CD4-positive, alpha-beta memory T cell (primary cell): ENCODE measurements at regions of chr1 and their contacts with region 1.

Region 1: DNA sequence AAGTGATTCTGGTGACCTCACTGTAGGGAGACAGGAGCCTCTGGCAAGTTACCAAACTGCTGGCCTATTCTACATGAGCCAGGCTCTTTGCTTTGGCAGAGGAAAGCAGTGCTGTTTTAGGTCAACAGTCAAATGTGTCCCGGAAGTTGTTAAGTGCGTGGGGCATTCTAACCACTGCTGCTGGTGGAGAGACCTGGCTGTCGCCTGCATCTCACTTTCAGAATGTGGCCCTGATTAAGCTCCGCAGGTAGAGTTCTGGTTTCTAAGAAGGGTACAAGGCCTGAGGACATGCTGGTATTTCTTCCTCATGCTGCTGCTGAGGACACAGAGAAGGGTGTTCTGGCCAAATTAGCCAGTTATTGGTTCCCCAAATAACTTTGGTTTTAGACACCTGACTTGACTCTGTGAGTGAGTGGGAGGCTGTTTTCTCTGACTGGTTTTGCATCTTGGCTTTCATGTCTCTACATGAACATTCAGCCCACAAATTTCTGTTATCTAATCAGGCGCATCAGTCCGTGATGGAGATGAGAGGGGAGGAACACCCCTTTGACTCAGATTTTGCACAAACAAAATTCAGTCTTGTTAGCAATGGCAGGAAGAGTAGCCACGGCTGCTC is 120.8 kb downstream of the LMO4 start:
- DNase-seq: peak; percentile 41 to 56 (median 51)
- H3K4me3 ChIP-seq: no peak overlapping the region
- H3K4me3 Mint-ChIP-seq: peak overlapping the region; percentile 45 to 89 (median 79)
- H3K27ac ChIP-seq: no peak overlapping the region
- H3K27ac Mint-ChIP-seq: peak overlapping the region; percentile 78 to 95 (median 93)
- H3K4me1 ChIP-seq: peaks cover 18% of the 10 kb centered on the region
- H3K4me1 Mint-ChIP-seq: peaks cover 13 to 35% (median 28%) of the 10 kb centered on the region in 4 donors
- H3K27me3 ChIP-seq: no peaks in the 10 kb centered on the region
- H3K27me3 Mint-ChIP-seq: no peaks in the 10 kb centered on the region

Region 2: DNA sequence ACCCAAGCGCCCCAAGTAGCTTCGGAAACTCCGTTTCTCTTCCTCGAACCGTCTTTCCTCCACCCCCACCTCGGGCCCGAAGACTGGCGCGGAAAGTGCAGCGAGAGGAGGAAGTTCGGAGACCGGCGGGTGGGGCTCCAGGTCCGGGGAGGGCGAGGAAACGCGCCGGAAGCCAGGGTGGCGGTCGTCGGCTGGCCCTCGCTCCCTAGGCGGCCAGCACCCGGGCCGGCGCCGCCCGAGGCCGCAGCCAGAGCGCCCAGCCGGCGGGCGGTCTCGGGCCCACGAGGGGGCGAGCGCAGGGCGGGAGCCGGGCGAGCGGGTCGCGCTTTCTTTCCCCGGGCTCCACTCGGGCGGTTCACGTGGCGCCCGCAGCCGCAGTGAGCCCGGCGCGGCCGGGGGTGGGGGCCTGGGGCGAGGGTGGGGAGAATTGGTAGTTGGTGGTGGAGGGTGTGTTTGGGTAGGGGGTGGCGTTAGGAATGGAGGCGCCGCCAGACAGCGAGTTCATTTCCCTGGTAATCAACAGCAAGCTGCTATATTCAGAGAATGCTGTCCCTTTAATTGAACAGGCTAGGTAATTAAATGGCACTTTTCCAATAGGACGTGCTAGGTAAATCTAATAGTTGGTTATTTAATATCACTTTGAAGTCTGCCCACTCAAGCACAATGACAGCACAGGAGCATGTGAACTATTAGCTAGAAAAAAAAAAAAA is 114.1 kb before region 1 on chr1:
- CTCF ChIA-PET with region 1: interaction called, 5 read pairs
- POLR2A ChIA-PET with region 1: interaction called, 42 read pairs
- intact Hi-C with region 1: no loop called
- DNase-seq: peak; percentile 48 to 76 (median 66)
- H3K4me3 ChIP-seq: peak overlapping the region in 1 of 2 donors; percentile 51
- H3K4me3 Mint-ChIP-seq: peak overlapping the region; percentile 90 to 97 (median 92)
- H3K27ac ChIP-seq: peak overlapping the region; percentile 54
- H3K27ac Mint-ChIP-seq: peak overlapping the region; percentile 65 to 96 (median 93)
- H3K4me1 ChIP-seq: peaks cover 51% of the 10 kb centered on the region
- H3K4me1 Mint-ChIP-seq: peaks cover 38 to 73% (median 50%) of the 10 kb centered on the region in 4 donors
- H3K27me3 ChIP-seq: no peaks in the 10 kb centered on the region
- H3K27me3 Mint-ChIP-seq: peaks cover 0 to 3% of the 10 kb centered on the region in 2 donors

Region 3: DNA sequence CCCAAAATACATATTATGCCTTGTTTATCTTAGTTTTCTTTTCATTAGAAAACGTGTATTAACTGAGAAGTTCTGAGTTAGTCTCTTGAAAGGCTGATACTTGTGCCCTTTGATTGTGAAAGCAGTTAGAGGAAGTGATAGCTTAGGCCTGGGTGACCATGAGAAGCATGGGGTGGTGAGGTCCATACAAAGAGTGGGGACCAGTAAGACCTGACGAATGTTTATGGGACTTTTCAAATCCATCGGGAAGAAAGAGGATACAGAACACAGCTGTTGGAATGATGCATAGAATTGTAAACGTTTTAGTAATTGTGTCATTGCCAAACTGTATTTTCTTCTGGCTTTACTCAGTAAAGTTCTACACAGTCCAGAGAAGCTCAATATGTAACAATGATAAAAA is 139.0 kb after region 1 on chr1:
- CTCF ChIA-PET with region 1: no interaction called
- POLR2A ChIA-PET with region 1: no interaction called
- intact Hi-C with region 1: no loop called
- DNase-seq: no peak
- H3K4me3 ChIP-seq: no peak overlapping the region
- H3K4me3 Mint-ChIP-seq: no peak overlapping the region
- H3K27ac ChIP-seq: no peak overlapping the region
- H3K27ac Mint-ChIP-seq: no peak overlapping the region
- H3K4me1 ChIP-seq: no peaks in the 10 kb centered on the region
- H3K4me1 Mint-ChIP-seq: no peaks in the 10 kb centered on the region
- H3K27me3 ChIP-seq: no peaks in the 10 kb centered on the region
- H3K27me3 Mint-ChIP-seq: peaks cover 4 to 5% of the 10 kb centered on the region in 2 donors